ENCODE measurements at regions of chr11 and their contacts with region 1.

Region 1: GRCh38 chr11:65817835-65818742 is 15.7 kb upstream of the SNX32 start:
- DNase-seq: peak; percentile 99

Region 2: GRCh38 chr11:65709626-65710025 is 108.5 kb before region 1 on chr11:
- intact Hi-C with region 1: loop called in 1 of 2 experiments (anchors 5 kb)
- DNase-seq: no peak

Region 3: GRCh38 chr11:65779851-65780577 is 38.1 kb before region 1 on chr11:
- intact Hi-C with region 1: loop called in 1 of 2 experiments (anchors 2 kb)
- DNase-seq: peak; percentile 95

Region 4: GRCh38 chr11:66466225-66467027 is 648.3 kb after region 1 on chr11 and contains the start of gene PELI3:
- intact Hi-C with region 1: loop called in 1 of 2 experiments (anchors 5 kb)
- DNase-seq: peak; percentile 97
- total RNA-seq, gene PELI3: 12.4 to 13.0 TPM